Caco-2 (cell line): ENCODE measurements at regions of chr3 and their contacts with region 1.

Region 1: GRCh38 chr3:193917158-193917557 is 218.8 kb upstream of the HES1 start:
- DNase-seq: no peak
- H3K4me3 ChIP-seq: no peak overlapping the region
- H3K4me3 Mint-ChIP-seq: no peak overlapping the region
- H3K27ac Mint-ChIP-seq: peak overlapping the region; percentile 65
- H3K4me1 ChIP-seq: peaks cover 55% of the 10 kb centered on the region
- H3K4me1 Mint-ChIP-seq: peaks cover 46% of the 10 kb centered on the region
- H3K27me3 ChIP-seq: no peaks in the 10 kb centered on the region
- H3K27me3 Mint-ChIP-seq: no peaks in the 10 kb centered on the region
- CTCF ChIP-seq: no peak

Region 2: GRCh38 chr3:193701904-193702635 is 215.1 kb before region 1 on chr3:
- CTCF ChIA-PET with region 1: no interaction called
- POLR2A ChIA-PET with region 1: interaction called, 14 read pairs
- intact Hi-C with region 1: no loop called
- DNase-seq: no peak
- H3K4me3 ChIP-seq: no peak overlapping the region
- H3K4me3 Mint-ChIP-seq: no peak overlapping the region
- H3K27ac Mint-ChIP-seq: no peak overlapping the region
- H3K4me1 ChIP-seq: no peaks in the 10 kb centered on the region
- H3K4me1 Mint-ChIP-seq: no peaks in the 10 kb centered on the region
- H3K27me3 ChIP-seq: no peaks in the 10 kb centered on the region
- H3K27me3 Mint-ChIP-seq: no peaks in the 10 kb centered on the region
- CTCF ChIP-seq: no peak

Region 3: DNA sequence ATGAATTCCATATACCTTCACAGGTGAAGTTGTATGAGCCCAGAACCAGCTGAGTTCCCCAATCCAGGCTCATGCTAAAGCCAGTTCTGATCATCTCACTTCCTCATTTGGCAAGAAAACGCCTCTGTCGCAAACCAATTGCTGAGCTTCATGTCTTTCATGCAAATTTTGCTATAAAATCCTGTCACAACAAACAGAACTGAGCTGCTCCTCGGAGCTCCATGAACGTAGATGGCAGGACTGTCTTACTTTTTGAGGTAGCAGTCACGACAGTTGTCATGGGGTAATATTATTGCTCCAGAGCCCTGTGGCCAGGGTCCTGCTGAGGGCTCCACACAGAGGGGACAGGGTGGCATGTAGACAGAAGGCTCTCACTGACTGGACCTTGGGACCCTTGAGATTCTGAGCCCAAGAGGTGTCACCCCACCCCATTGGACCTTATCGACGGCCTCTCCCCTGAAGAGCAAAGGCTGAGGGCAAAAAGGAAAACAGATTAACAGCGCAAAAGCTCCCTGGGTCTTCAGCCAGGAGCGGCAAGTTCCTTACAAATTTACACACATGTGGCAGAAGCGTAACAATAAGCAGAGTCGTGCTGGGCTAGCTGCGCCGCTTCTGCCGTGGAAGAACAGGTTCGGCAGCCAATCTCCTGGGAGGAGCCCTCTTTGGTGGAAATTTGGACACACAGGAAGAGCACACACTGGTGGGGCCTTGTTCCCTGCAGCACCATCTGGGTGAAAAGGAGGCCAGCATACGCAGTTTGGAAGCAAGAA is 74.9 kb before region 1 on chr3:
- CTCF ChIA-PET with region 1: interaction called, 8 read pairs
- POLR2A ChIA-PET with region 1: interaction called, 4 read pairs
- intact Hi-C with region 1: loop called (anchors 1 kb)
- DNase-seq: peak in 1 of 2 experiments; percentile 48
- H3K4me3 ChIP-seq: peak overlapping the region; percentile 37
- H3K4me3 Mint-ChIP-seq: peak overlapping the region; percentile 73
- H3K27ac Mint-ChIP-seq: peak overlapping the region; percentile 92
- H3K4me1 ChIP-seq: peaks cover 77% of the 10 kb centered on the region
- H3K4me1 Mint-ChIP-seq: peaks cover 50% of the 10 kb centered on the region
- H3K27me3 ChIP-seq: no peaks in the 10 kb centered on the region
- H3K27me3 Mint-ChIP-seq: no peaks in the 10 kb centered on the region
- CTCF ChIP-seq: no peak

Region 4: GRCh38 chr3:194003125-194004057 is 86.2 kb after region 1 on chr3:
- CTCF ChIA-PET with region 1: no interaction called
- POLR2A ChIA-PET with region 1: no interaction called
- intact Hi-C with region 1: loop called (anchors 1 kb)
- DNase-seq: peak; percentile 87 to 94
- H3K4me3 ChIP-seq: peak overlapping the region; percentile 35
- H3K4me3 Mint-ChIP-seq: peak overlapping the region; percentile 76
- H3K27ac Mint-ChIP-seq: peak overlapping the region; percentile 81
- H3K4me1 ChIP-seq: peaks cover 42% of the 10 kb centered on the region
- H3K4me1 Mint-ChIP-seq: peaks cover 29% of the 10 kb centered on the region
- H3K27me3 ChIP-seq: no peaks in the 10 kb centered on the region
- H3K27me3 Mint-ChIP-seq: no peaks in the 10 kb centered on the region
- CTCF ChIP-seq: no peak

Region 5: GRCh38 chr3:194100856-194101390 is 183.8 kb after region 1 on chr3:
- CTCF ChIA-PET with region 1: no interaction called
- POLR2A ChIA-PET with region 1: no interaction called
- intact Hi-C with region 1: loop called (anchors 1 kb)
- DNase-seq: no peak
- H3K4me3 ChIP-seq: no peak overlapping the region
- H3K4me3 Mint-ChIP-seq: peak overlapping the region; percentile 43
- H3K27ac Mint-ChIP-seq: peak overlapping the region; percentile 46
- H3K4me1 ChIP-seq: peaks cover 70% of the 10 kb centered on the region
- H3K4me1 Mint-ChIP-seq: peaks cover 67% of the 10 kb centered on the region
- H3K27me3 ChIP-seq: no peaks in the 10 kb centered on the region
- H3K27me3 Mint-ChIP-seq: no peaks in the 10 kb centered on the region
- CTCF ChIP-seq: no peak

Region 6: GRCh38 chr3:194315088-194315964 is 398.2 kb after region 1 on chr3:
- CTCF ChIA-PET with region 1: no interaction called
- POLR2A ChIA-PET with region 1: no interaction called
- intact Hi-C with region 1: loop called (anchors 1 kb)
- DNase-seq: peak; percentile 92 to 95
- H3K4me3 ChIP-seq: peak overlapping the region; percentile 51
- H3K4me3 Mint-ChIP-seq: peak overlapping the region; percentile 85
- H3K27ac Mint-ChIP-seq: peak overlapping the region; percentile 93
- H3K4me1 ChIP-seq: peaks cover 41% of the 10 kb centered on the region
- H3K4me1 Mint-ChIP-seq: peaks cover 49% of the 10 kb centered on the region
- H3K27me3 ChIP-seq: no peaks in the 10 kb centered on the region
- H3K27me3 Mint-ChIP-seq: no peaks in the 10 kb centered on the region
- CTCF ChIP-seq: peak; percentile 87 to 95